CD4-positive, alpha-beta memory T cell (primary cell): ENCODE measurements at regions of chr3 and their contacts with region 1.

Region 1: GRCh38 chr3:189148081-189148507 is 23.7 kb upstream of the TPRG1 start:
- DNase-seq: peak; percentile 50 to 61 (median 60)
- H3K4me3 ChIP-seq: no peak overlapping the region
- H3K4me3 Mint-ChIP-seq: no peak overlapping the region
- H3K27ac ChIP-seq: no peak overlapping the region
- H3K27ac Mint-ChIP-seq: peak overlapping the region in 1 of 7 donors; percentile 62
- H3K4me1 ChIP-seq: peaks cover 19% of the 10 kb centered on the region
- H3K4me1 Mint-ChIP-seq: peaks cover 13 to 28% (median 21%) of the 10 kb centered on the region in 4 donors
- H3K27me3 ChIP-seq: no peaks in the 10 kb centered on the region
- H3K27me3 Mint-ChIP-seq: no peaks in the 10 kb centered on the region

Region 2: DNA sequence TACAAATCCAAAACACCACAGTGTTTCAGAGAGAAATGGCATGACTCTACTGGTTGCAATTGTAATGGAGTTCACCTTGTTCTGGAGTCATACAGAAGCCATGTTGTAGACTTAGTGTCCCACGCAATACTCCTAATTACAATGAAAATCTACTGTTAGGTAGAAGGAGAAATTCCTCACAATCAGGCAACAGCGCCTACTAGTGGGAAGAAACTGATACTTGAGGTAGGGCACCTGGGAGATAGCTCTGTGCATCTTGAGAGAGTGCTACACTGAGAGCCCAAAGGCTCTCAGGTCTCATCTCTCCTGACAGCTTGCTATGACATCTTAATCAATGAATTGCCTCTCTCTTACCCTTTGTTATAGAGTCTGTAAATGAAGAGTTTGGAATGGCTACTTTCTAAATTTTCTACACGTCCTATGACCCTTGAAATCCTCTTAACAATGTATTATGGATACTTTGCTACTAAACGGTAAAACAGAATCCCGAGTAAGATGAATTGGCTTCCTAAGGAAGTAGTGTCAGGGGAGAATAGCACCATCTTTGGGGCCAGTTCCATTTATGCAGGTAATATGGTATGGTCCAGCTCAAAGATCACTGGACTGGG is 399.0 kb before region 1 on chr3:
- CTCF ChIA-PET with region 1: interaction called, 18 read pairs
- POLR2A ChIA-PET with region 1: no interaction called
- intact Hi-C with region 1: loop called (anchors 1 kb)
- DNase-seq: peak; percentile 55 to 63 (median 59)
- H3K4me3 ChIP-seq: no peak overlapping the region
- H3K4me3 Mint-ChIP-seq: no peak overlapping the region
- H3K27ac ChIP-seq: no peak overlapping the region
- H3K27ac Mint-ChIP-seq: no peak overlapping the region
- H3K4me1 ChIP-seq: no peaks in the 10 kb centered on the region
- H3K4me1 Mint-ChIP-seq: peaks cover 0 to 5% (median 0%) of the 10 kb centered on the region in 4 donors
- H3K27me3 ChIP-seq: no peaks in the 10 kb centered on the region
- H3K27me3 Mint-ChIP-seq: no peaks in the 10 kb centered on the region

Region 3: GRCh38 chr3:188830893-188831292 is 317.2 kb before region 1 on chr3:
- CTCF ChIA-PET with region 1: interaction called, 12 read pairs
- POLR2A ChIA-PET with region 1: interaction called, 3 read pairs
- intact Hi-C with region 1: loop called (anchors 1 kb)
- DNase-seq: no peak
- H3K4me3 ChIP-seq: no peak overlapping the region
- H3K4me3 Mint-ChIP-seq: no peak overlapping the region
- H3K27ac ChIP-seq: no peak overlapping the region
- H3K27ac Mint-ChIP-seq: no peak overlapping the region
- H3K4me1 ChIP-seq: peaks cover 17% of the 10 kb centered on the region
- H3K4me1 Mint-ChIP-seq: peaks cover 13 to 20% (median 19%) of the 10 kb centered on the region in 4 donors
- H3K27me3 ChIP-seq: no peaks in the 10 kb centered on the region
- H3K27me3 Mint-ChIP-seq: no peaks in the 10 kb centered on the region

Region 4: DNA sequence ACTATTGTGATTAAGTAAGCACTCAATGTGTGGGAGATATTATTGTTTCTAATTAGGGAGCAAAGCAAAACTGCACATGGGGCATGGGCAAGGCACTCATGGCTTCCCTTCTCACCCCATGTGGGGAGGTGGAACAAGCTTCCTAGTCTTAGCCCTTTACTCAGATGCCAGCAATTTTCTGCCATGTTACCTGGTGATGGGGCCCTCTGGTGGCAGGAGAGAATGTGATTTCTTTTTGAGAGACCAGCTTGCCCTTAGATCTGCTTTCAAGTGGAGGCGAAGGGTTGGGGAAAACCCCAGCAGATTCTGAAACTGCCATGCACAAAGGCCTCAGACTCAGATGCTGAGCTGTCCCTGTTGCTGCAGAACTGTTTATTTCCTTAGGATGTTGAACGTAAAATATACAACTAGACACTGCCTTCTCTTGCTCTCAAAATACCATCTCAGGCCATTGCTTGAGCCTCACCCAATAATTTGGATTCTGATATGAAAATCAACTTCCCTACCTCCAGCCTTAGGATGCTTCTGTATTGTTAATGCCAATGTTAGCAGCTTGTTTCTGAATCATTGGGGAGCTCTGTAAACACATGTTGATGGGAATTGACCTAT is 106.5 kb before region 1 on chr3:
- CTCF ChIA-PET with region 1: interaction called, 128 read pairs
- POLR2A ChIA-PET with region 1: interaction called, 30 read pairs
- intact Hi-C with region 1: loop called (anchors 1 kb)
- DNase-seq: peak; percentile 72 to 82 (median 78)
- H3K4me3 ChIP-seq: no peak overlapping the region
- H3K4me3 Mint-ChIP-seq: no peak overlapping the region
- H3K27ac ChIP-seq: peak overlapping the region; percentile 52
- H3K27ac Mint-ChIP-seq: peak overlapping the region; percentile 8 to 87 (median 50)
- H3K4me1 ChIP-seq: peaks cover 7% of the 10 kb centered on the region
- H3K4me1 Mint-ChIP-seq: peaks cover 6 to 11% (median 8%) of the 10 kb centered on the region in 4 donors
- H3K27me3 ChIP-seq: no peaks in the 10 kb centered on the region
- H3K27me3 Mint-ChIP-seq: no peaks in the 10 kb centered on the region

Region 5: GRCh38 chr3:189049438-189050236 is 98.5 kb before region 1 on chr3:
- CTCF ChIA-PET with region 1: interaction called, 128 read pairs
- POLR2A ChIA-PET with region 1: interaction called, 23 read pairs
- intact Hi-C with region 1: no loop called
- DNase-seq: peak; percentile 22 to 51 (median 36)
- H3K4me3 ChIP-seq: no peak overlapping the region
- H3K4me3 Mint-ChIP-seq: peak overlapping the region; percentile 26 to 80 (median 69)
- H3K27ac ChIP-seq: no peak overlapping the region
- H3K27ac Mint-ChIP-seq: peak overlapping the region; percentile 33 to 95 (median 88)
- H3K4me1 ChIP-seq: peaks cover 20% of the 10 kb centered on the region
- H3K4me1 Mint-ChIP-seq: peaks cover 13 to 29% (median 20%) of the 10 kb centered on the region in 4 donors
- H3K27me3 ChIP-seq: no peaks in the 10 kb centered on the region
- H3K27me3 Mint-ChIP-seq: peaks cover 0 to 3% of the 10 kb centered on the region in 2 donors

Region 6: GRCh38 chr3:189123595-189124387 is 24.3 kb before region 1 on chr3:
- CTCF ChIA-PET with region 1: interaction called, 78 read pairs
- POLR2A ChIA-PET with region 1: interaction called, 206 read pairs
- intact Hi-C with region 1: no loop called
- DNase-seq: no peak
- H3K4me3 ChIP-seq: no peak overlapping the region
- H3K4me3 Mint-ChIP-seq: peak overlapping the region in 6 of 8 donors; percentile 73 to 85 (median 78)
- H3K27ac ChIP-seq: no peak overlapping the region
- H3K27ac Mint-ChIP-seq: peak overlapping the region in 5 of 7 donors; percentile 7 to 93 (median 72)
- H3K4me1 ChIP-seq: peaks cover 45% of the 10 kb centered on the region
- H3K4me1 Mint-ChIP-seq: peaks cover 16 to 66% (median 34%) of the 10 kb centered on the region in 4 donors
- H3K27me3 ChIP-seq: no peaks in the 10 kb centered on the region
- H3K27me3 Mint-ChIP-seq: no peaks in the 10 kb centered on the region

Region 7: GRCh38 chr3:189132231-189132707 is 15.8 kb before region 1 on chr3:
- CTCF ChIA-PET with region 1: interaction called, 73 read pairs
- POLR2A ChIA-PET with region 1: interaction called, 206 read pairs
- intact Hi-C with region 1: no loop called
- DNase-seq: peak; percentile 70 to 93 (median 77)
- H3K4me3 ChIP-seq: peak overlapping the region in 1 of 2 donors; percentile 5
- H3K4me3 Mint-ChIP-seq: peak overlapping the region; percentile 64 to 91 (median 78)
- H3K27ac ChIP-seq: peak overlapping the region; percentile 62
- H3K27ac Mint-ChIP-seq: peak overlapping the region; percentile 87 to 98 (median 94)
- H3K4me1 ChIP-seq: peaks cover 30% of the 10 kb centered on the region
- H3K4me1 Mint-ChIP-seq: peaks cover 25 to 51% (median 39%) of the 10 kb centered on the region in 4 donors
- H3K27me3 ChIP-seq: no peaks in the 10 kb centered on the region
- H3K27me3 Mint-ChIP-seq: no peaks in the 10 kb centered on the region